ENCODE measurements at regions of chr20 and their contacts with region 1.

Region 1: GRCh38 chr20:2713285-2713684 is 20.7 kb downstream of the EBF4 start:
- DNase-seq: no peak
- ATAC-seq: peak; percentile 81
- H3K4me3 Mint-ChIP-seq: no peak overlapping the region
- H3K27ac Mint-ChIP-seq: no peak overlapping the region
- H3K4me1 Mint-ChIP-seq: no peaks in the 10 kb centered on the region
- H3K27me3 Mint-ChIP-seq: no peaks in the 10 kb centered on the region

Region 2: DNA sequence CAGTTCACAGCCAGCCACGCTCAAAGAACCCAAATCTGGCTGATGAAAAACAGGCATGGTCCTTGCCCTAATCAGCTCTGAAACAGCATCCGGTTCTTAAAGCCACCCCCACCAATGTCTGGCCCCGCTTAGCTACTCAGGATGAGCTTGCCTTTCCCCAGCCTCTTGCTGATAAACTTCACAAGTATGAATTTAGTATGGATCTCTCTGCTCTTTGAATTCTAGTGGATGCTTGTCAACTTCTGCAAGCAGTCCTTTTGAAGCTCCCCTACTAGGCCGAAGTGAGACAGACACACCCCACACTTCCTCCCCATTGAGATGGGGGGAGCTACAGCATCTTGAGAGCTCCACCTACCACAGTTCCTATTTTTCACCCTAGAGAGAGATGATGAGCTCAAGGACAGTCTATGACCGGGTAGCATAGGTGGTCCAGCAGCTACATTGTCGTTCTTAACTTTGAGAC is 16.0 kb after region 1 on chr20:
- CTCF ChIA-PET with region 1: interaction called, 26 read pairs
- POLR2A ChIA-PET with region 1: no interaction called
- intact Hi-C with region 1: no loop called
- DNase-seq: peak; percentile 36
- ATAC-seq: peak; percentile 90
- H3K4me3 Mint-ChIP-seq: peak overlapping the region; percentile 2
- H3K27ac Mint-ChIP-seq: peak overlapping the region; percentile 79
- H3K4me1 Mint-ChIP-seq: peaks cover 21% of the 10 kb centered on the region
- H3K27me3 Mint-ChIP-seq: no peaks in the 10 kb centered on the region